ENCODE measurements at regions of chr19 and their contacts with region 1.

Region 1: GRCh38 chr19:19063183-19064097 is at the start of gene SLC25A42:
- DNase-seq: peak; percentile 97 to 100 (median 99)
- ATAC-seq: peak; percentile 91
- H3K4me3 ChIP-seq: peak within 1 kb of the TSS; percentile 73
- H3K4me3 Mint-ChIP-seq: peak within 1 kb of the TSS; percentile 86
- H3K27ac ChIP-seq: peak within 1 kb of the TSS; percentile 44 to 61
- H3K27ac Mint-ChIP-seq: peak within 1 kb of the TSS; percentile 65
- H3K4me1 ChIP-seq: peaks cover 49% of the 10 kb centered on the region
- H3K4me1 Mint-ChIP-seq: peaks cover 35% of the 10 kb centered on the region
- H3K27me3 ChIP-seq: no peaks in the 10 kb centered on the region
- H3K27me3 Mint-ChIP-seq: no peaks in the 10 kb centered on the region
- CTCF ChIP-seq: no peak
- total RNA-seq, gene SLC25A42: 15.1 to 15.4 TPM

Region 2: GRCh38 chr19:19021115-19021514 is 42.3 kb before region 1 on chr19:
- CTCF ChIA-PET with region 1: no interaction called
- POLR2A ChIA-PET with region 1: no interaction called
- intact Hi-C with region 1: no loop called
- DNase-seq: no peak
- ATAC-seq: no peak
- H3K4me3 ChIP-seq: no peak overlapping the region
- H3K4me3 Mint-ChIP-seq: no peak overlapping the region
- H3K27ac ChIP-seq: no peak overlapping the region
- H3K27ac Mint-ChIP-seq: no peak overlapping the region
- H3K4me1 ChIP-seq: peaks cover 6% of the 10 kb centered on the region
- H3K4me1 Mint-ChIP-seq: peaks cover 29% of the 10 kb centered on the region
- H3K27me3 ChIP-seq: no peaks in the 10 kb centered on the region
- H3K27me3 Mint-ChIP-seq: no peaks in the 10 kb centered on the region
- CTCF ChIP-seq: no peak

Region 3: DNA sequence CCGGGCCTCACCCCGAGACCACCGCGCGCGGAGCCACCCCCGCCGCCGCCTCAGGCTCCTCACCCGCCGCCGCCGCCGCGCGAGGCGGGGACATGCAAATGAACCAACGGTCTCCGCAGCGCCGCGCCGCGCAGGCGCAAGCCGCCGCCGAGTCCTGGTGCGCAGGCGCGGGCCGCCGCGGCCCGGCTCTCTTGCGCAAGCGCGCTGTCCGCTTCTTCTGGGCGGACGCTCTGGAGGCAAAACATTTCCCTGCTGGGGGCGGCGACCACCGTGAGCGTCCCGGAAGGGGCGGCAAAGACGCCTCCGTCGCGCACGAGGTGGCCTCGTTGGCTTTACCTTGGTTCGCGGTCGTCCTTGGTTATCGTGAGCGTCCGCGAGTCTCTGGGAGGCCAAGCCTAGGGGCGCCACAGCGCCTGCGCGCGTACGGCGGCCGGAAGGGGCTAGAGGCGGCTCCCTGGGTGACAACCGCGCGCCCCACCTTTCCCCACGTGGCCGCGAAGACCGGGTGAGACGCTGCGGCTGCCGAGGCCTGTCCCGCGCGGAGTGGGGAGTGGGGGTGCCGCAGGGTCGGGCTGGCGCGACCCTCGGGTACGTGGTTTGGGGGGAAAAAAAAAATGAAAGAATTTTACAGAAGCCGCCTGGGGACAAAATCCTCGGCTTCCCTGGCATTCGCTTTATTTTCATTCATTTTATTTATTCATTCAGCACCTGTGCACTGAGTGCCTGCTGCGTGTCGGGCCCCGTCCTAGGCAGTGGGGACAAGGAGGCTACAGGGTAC is 29.8 kb before region 1 on chr19 and contains the starts of genes ARMC6 and SUGP2:
- CTCF ChIA-PET with region 1: no interaction called
- POLR2A ChIA-PET with region 1: no interaction called
- intact Hi-C with region 1: loop called in 1 of 2 experiments (anchors 1 kb)
- DNase-seq: peak; percentile 77 to 96 (median 87)
- ATAC-seq: peak; percentile 71
- H3K4me3 ChIP-seq: peak within 1 kb of the TSS; percentile 86
- H3K4me3 Mint-ChIP-seq: peak within 1 kb of the TSS; percentile 99
- H3K27ac ChIP-seq: peak within 1 kb of the TSS; percentile 77 to 81
- H3K27ac Mint-ChIP-seq: peak within 1 kb of the TSS; percentile 88
- H3K4me1 ChIP-seq: peaks cover 42% of the 10 kb centered on the region
- H3K4me1 Mint-ChIP-seq: peaks cover 38% of the 10 kb centered on the region
- H3K27me3 ChIP-seq: no peaks in the 10 kb centered on the region
- H3K27me3 Mint-ChIP-seq: no peaks in the 10 kb centered on the region
- CTCF ChIP-seq: no peak
- total RNA-seq, gene ARMC6: 5.9 to 6.0 TPM
- total RNA-seq, gene SUGP2: 106 to 110 TPM

Measured in CD4-positive, alpha-beta T cell (primary cell).